T-cell (primary cell): ENCODE measurements at regions of chr6 and their contacts with region 1.

Region 1: GRCh38 chr6:119096721-119097565 is 18.5 kb upstream of the FAM184A start:
- DNase-seq: peak in 1 of 35 experiments; percentile 8
- ATAC-seq: peak in 2 of 4 experiments; percentile 29 to 60
- H3K4me3 ChIP-seq: no peak overlapping the region
- H3K4me3 Mint-ChIP-seq: peak overlapping the region in 1 of 3 donors; percentile 1
- H3K27ac ChIP-seq: no peak overlapping the region
- H3K27ac Mint-ChIP-seq: peak overlapping the region; percentile 62 to 71
- H3K4me1 ChIP-seq: peaks cover 2 to 5% of the 10 kb centered on the region in 2 experiments
- H3K4me1 Mint-ChIP-seq: peaks cover 17 to 31% (median 21%) of the 10 kb centered on the region in 3 donors
- H3K27me3 ChIP-seq: no peaks in the 10 kb centered on the region
- H3K27me3 Mint-ChIP-seq: no peaks in the 10 kb centered on the region

Region 2: GRCh38 chr6:118528129-118528528 is 568.8 kb before region 1 on chr6:
- CTCF ChIA-PET with region 1: no interaction called
- POLR2A ChIA-PET with region 1: interaction called in 1 of 2 experiments, 10 read pairs
- DNase-seq: no peak
- ATAC-seq: no peak
- H3K4me3 ChIP-seq: no peak overlapping the region
- H3K4me3 Mint-ChIP-seq: no peak overlapping the region
- H3K27ac ChIP-seq: no peak overlapping the region
- H3K27ac Mint-ChIP-seq: peak overlapping the region in 1 of 2 donors; percentile 16
- H3K4me1 ChIP-seq: no peaks in the 10 kb centered on the region
- H3K4me1 Mint-ChIP-seq: peaks cover 65 to 71% (median 70%) of the 10 kb centered on the region in 3 donors
- H3K27me3 ChIP-seq: no peaks in the 10 kb centered on the region
- H3K27me3 Mint-ChIP-seq: no peaks in the 10 kb centered on the region